ENCODE measurements at regions of chr3 and their contacts with region 1.

Region 1: GRCh38 chr3:136196401-136197158 is 445 bp upstream of the MSL2 start:
- DNase-seq: peak; percentile 100
- H3K4me3 ChIP-seq: peak overlapping the region; percentile 92
- H3K27ac ChIP-seq: peak overlapping the region; percentile 98
- H3K4me1 ChIP-seq: peaks cover 27% of the 10 kb centered on the region
- H3K27me3 ChIP-seq: no peaks in the 10 kb centered on the region
- CTCF ChIP-seq: no peak

Region 2: GRCh38 chr3:135249186-135249585 is 947.4 kb before region 1 on chr3:
- CTCF ChIA-PET with region 1: no interaction called
- POLR2A ChIA-PET with region 1: no interaction called
- intact Hi-C with region 1: no loop called
- DNase-seq: no peak
- H3K4me3 ChIP-seq: no peak overlapping the region
- H3K27ac ChIP-seq: no peak overlapping the region
- H3K4me1 ChIP-seq: no peaks in the 10 kb centered on the region
- H3K27me3 ChIP-seq: no peaks in the 10 kb centered on the region
- CTCF ChIP-seq: no peak

Region 3: GRCh38 chr3:135950941-135951340 is 245.6 kb before region 1 on chr3:
- CTCF ChIA-PET with region 1: no interaction called
- POLR2A ChIA-PET with region 1: no interaction called
- intact Hi-C with region 1: no loop called
- DNase-seq: no peak
- H3K4me3 ChIP-seq: no peak overlapping the region
- H3K27ac ChIP-seq: no peak overlapping the region
- H3K4me1 ChIP-seq: no peaks in the 10 kb centered on the region
- H3K27me3 ChIP-seq: peaks cover 31% of the 10 kb centered on the region
- CTCF ChIP-seq: no peak

Region 4: GRCh38 chr3:136250226-136250902 is 53.8 kb after region 1 on chr3 and contains the start of gene PCCB:
- CTCF ChIA-PET with region 1: interaction called, 6 read pairs
- POLR2A ChIA-PET with region 1: no interaction called
- intact Hi-C with region 1: loop called (anchors 1 kb)
- DNase-seq: peak; percentile 95
- H3K4me3 ChIP-seq: peak within 1 kb of the TSS; percentile 57
- H3K27ac ChIP-seq: peak within 1 kb of the TSS; percentile 86
- H3K4me1 ChIP-seq: peaks cover 5% of the 10 kb centered on the region
- H3K27me3 ChIP-seq: no peaks in the 10 kb centered on the region
- CTCF ChIP-seq: peak; percentile 77
- total RNA-seq, gene PCCB: 82.1 and 94.6 TPM in 2 replicates

Region 5: DNA sequence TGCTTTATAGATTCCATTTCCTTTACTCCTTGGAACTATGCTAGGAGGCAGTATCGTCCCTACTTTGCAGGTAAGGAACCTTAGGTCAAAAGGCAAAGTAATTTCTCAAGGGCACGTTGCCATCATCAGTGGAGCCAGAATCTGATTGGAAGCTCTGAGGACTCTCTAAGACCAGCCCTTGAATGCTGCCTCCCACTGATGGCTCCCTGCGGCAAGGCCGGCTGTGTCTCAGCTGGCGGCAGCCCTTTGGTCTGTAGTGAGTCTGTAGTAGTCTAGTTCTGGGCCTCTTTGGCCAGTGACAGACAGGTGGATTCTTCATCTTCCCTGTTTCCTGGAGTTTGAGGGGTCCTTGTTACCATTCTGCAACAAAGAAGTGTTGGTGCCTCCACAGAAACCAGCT is 129.7 kb after region 1 on chr3:
- CTCF ChIA-PET with region 1: no interaction called
- POLR2A ChIA-PET with region 1: no interaction called
- intact Hi-C with region 1: no loop called
- DNase-seq: no peak
- H3K4me3 ChIP-seq: no peak overlapping the region
- H3K27ac ChIP-seq: no peak overlapping the region
- H3K4me1 ChIP-seq: no peaks in the 10 kb centered on the region
- H3K27me3 ChIP-seq: no peaks in the 10 kb centered on the region
- CTCF ChIP-seq: no peak

Region 6: DNA sequence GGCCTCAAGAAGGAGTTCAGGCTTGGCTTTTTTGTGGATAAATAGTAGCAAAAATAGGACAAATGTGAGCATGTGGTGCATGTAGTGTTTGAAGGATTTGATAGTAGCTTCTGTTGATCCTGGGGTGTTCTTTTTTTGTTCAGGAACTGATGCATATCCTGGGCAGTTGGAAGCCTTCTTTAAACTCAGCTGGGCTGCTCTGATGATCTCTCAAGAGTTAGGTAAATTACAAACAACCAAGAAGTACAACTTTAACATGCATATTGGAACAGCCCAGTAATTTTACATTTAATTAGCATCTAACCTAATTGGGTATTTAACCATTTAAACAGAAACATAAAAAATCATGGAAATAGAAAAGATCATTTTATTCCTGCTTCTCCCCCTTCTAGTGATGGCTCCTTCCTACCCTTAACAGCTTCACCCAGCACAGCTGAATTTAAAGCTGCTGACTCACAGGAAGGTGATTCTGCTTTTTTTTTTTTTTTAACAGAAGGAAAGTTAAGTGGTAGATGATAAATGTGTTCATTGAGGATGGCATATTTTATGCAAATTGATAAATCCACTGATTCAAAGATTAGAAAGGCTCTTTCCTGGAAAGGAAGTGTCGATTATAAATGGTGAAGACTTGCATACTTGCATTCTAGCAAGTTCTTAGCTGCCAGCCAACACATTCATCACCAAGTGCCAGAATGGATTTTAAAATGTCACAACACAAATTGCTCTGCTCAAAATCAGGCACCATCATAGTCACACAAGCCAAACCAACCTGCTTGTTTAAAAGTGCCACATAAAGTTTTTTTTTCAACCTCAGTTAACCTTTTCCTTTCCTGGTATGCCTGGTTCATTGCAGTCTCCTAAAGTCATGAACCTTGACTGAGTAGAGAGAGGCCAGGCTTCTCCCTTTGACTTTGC is 642.3 kb after region 1 on chr3:
- CTCF ChIA-PET with region 1: no interaction called
- POLR2A ChIA-PET with region 1: no interaction called
- intact Hi-C with region 1: loop called (anchors 5 kb)
- DNase-seq: peak; percentile 96
- H3K4me3 ChIP-seq: peak overlapping the region; percentile 5
- H3K27ac ChIP-seq: peak overlapping the region; percentile 91
- H3K4me1 ChIP-seq: peaks cover 67% of the 10 kb centered on the region
- H3K27me3 ChIP-seq: no peaks in the 10 kb centered on the region
- CTCF ChIP-seq: no peak

Region 7: GRCh38 chr3:137062250-137062649 is 865.7 kb after region 1 on chr3:
- CTCF ChIA-PET with region 1: no interaction called
- POLR2A ChIA-PET with region 1: no interaction called
- intact Hi-C with region 1: no loop called
- DNase-seq: no peak
- H3K4me3 ChIP-seq: no peak overlapping the region
- H3K27ac ChIP-seq: no peak overlapping the region
- H3K4me1 ChIP-seq: no peaks in the 10 kb centered on the region
- H3K27me3 ChIP-seq: no peaks in the 10 kb centered on the region
- CTCF ChIP-seq: no peak

Measured in A673 (cell line).